PC-9 (cell line): ENCODE measurements at regions of chr6 and their contacts with region 1.

Region 1: GRCh38 chr6:89819336-89820130 is at the start of gene MDN1:
- DNase-seq: peak; percentile 83 to 86
- H3K4me3 ChIP-seq: peak within 1 kb of the TSS; percentile 69
- H3K27ac ChIP-seq: peak within 1 kb of the TSS; percentile 58
- H3K4me1 ChIP-seq: peaks cover 7% of the 10 kb centered on the region
- H3K27me3 ChIP-seq: no peaks in the 10 kb centered on the region
- CTCF ChIP-seq: no peak
- total RNA-seq, gene MDN1: 38.1 and 38.6 TPM in 2 replicates

Region 2: GRCh38 chr6:89829591-89830385 is 10.3 kb after region 1 on chr6 and contains the start of gene CASP8AP2:
- CTCF ChIA-PET with region 1: interaction called, 7 read pairs
- POLR2A ChIA-PET with region 1: interaction called, 18 read pairs
- intact Hi-C with region 1: loop called (anchors 1 kb)
- DNase-seq: peak; percentile 93 to 95
- H3K4me3 ChIP-seq: peak within 1 kb of the TSS; percentile 74
- H3K27ac ChIP-seq: peak within 1 kb of the TSS; percentile 47
- H3K4me1 ChIP-seq: 0 out of 2 replicates have a peak, but pooled peaks cover 3% of the 10 kb centered on the region
- H3K27me3 ChIP-seq: no peaks in the 10 kb centered on the region
- CTCF ChIP-seq: no peak
- total RNA-seq, gene CASP8AP2: 14.7 and 17.4 TPM in 2 replicates

Region 3: DNA sequence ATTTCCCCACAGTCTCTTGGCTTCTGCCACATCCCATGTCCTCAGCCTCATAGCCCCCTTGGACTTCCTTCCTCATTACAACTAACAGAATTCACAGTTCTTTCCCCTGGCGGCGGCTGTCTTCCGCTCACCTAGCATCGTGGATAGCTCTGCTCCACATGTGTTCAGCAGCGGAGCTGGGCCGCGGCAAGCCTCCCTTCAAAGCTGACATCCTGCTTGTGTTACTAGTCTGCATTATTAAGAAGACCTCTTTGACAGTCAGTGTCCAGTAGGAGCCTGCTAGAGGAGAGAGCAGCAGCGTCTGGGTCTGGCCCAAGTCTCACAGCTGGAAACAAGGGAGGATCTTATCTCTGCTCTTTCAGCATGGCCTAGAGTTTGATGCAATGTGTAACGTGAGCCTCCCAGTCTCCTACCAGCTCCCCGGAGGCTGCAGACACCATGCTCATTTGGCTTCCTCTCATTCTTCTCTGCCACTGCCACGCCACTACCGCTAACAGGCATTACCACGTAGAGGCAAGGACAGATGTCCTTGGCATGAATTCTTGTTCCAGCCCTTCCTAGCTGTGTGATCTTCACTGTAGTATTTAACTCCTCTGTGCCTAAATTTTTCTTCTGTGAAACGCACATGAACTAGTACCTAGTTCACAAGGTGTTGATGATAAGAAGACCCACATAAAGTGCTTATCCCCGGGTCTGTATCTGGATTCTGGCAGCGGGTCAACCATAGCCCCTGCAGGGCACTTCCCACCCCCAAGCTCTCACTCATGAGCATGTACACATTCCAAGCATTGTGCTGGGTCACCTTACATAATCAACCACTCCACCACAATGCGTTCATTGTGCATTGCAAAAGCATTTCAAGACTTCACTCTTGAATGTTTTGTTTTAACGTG is 584.2 kb after region 1 on chr6:
- CTCF ChIA-PET with region 1: no interaction called
- POLR2A ChIA-PET with region 1: no interaction called
- intact Hi-C with region 1: loop called (anchors 10 kb)
- DNase-seq: peak; percentile 50 to 78
- H3K4me3 ChIP-seq: no peak overlapping the region
- H3K27ac ChIP-seq: peak overlapping the region; percentile 14; the same call in 1 of the 2 replicates
- H3K4me1 ChIP-seq: peaks cover 32% of the 10 kb centered on the region
- H3K27me3 ChIP-seq: no peaks in the 10 kb centered on the region
- CTCF ChIP-seq: no peak